ENCODE measurements at regions of chr7 and their contacts with region 1.

Region 1: DNA sequence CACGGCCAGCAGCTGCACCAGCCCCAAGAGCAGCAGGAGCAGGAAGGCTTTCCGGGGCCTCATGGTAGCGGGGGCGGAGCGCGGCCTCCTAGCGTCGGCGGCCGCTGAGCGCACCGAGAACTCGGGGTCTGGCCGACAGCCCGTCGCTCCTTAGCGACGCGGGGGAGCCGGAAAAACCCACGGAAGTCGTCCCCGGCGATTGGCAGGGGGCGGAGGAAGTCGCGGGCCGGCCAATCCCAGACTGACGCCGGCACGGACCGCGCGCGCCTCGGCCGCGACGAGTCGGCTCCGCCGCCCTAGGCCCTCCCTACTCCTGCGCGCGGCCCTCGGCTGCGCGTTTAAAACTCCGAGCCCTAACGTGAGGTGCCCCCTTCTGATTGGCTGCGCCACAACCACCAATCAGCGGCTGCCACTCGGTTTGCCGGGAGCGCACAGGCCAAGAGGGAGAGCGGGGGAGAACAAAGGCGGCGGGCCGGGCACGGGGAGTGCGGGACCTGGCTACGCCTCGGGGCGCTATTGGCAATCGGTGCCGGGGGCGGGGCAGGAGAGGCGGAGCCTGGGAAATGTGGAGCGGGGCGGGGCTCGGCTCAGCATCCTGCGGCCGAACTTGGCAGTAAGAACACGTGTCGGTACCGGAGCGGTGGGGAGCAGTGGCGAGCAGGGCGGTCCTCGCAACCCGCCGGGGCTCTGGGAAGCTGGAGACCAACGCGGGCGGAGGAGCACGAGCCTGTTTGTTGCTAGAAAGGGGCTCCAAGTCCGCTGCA is at the start of gene PDIA4:
- DNase-seq: peak; percentile 100
- H3K4me3 ChIP-seq: peak within 1 kb of the TSS; percentile 68 to 88 (median 72)
- H3K27ac ChIP-seq: peak within 1 kb of the TSS; percentile 85 to 92 (median 90)
- H3K4me1 ChIP-seq: peaks cover 17 to 30% (median 25%) of the 10 kb centered on the region in 4 donors
- H3K27me3 ChIP-seq: no peaks in the 10 kb centered on the region
- CTCF ChIP-seq: peak; percentile 6 to 43 (median 9)
- EP300 ChIP-seq: no peak
- POLR2A ChIP-seq: peak; percentile 28
- total RNA-seq, gene PDIA4: 33.2 to 58.1 (median 42.8) TPM

Region 2: GRCh38 chr7:148698397-148699023 is 330.0 kb before region 1 on chr7 and contains the start of gene CUL1:
- intact Hi-C with region 1: no loop called
- DNase-seq: peak; percentile 96
- H3K4me3 ChIP-seq: peak within 1 kb of the TSS; percentile 81 to 99 (median 96)
- H3K27ac ChIP-seq: peak within 1 kb of the TSS; percentile 96 to 99 (median 99)
- H3K4me1 ChIP-seq: peaks cover 24 to 47% (median 43%) of the 10 kb centered on the region in 4 donors
- H3K27me3 ChIP-seq: no peaks in the 10 kb centered on the region
- CTCF ChIP-seq: no peak
- EP300 ChIP-seq: no peak
- POLR2A ChIP-seq: peak; percentile 66
- total RNA-seq, gene CUL1: 73.1 to 87.1 (median 77.8) TPM

Region 3: GRCh38 chr7:148987010-148987750 is 41.3 kb before region 1 on chr7:
- intact Hi-C with region 1: loop called (anchors 2 kb)
- DNase-seq: peak; percentile 96
- H3K4me3 ChIP-seq: peak overlapping the region; percentile 60 to 65 (median 63)
- H3K27ac ChIP-seq: peak overlapping the region; percentile 82 to 84 (median 83)
- H3K4me1 ChIP-seq: peaks cover 18 to 49% (median 42%) of the 10 kb centered on the region in 4 donors
- H3K27me3 ChIP-seq: no peaks in the 10 kb centered on the region
- CTCF ChIP-seq: no peak
- EP300 ChIP-seq: no peak
- POLR2A ChIP-seq: no peak

Region 4: DNA sequence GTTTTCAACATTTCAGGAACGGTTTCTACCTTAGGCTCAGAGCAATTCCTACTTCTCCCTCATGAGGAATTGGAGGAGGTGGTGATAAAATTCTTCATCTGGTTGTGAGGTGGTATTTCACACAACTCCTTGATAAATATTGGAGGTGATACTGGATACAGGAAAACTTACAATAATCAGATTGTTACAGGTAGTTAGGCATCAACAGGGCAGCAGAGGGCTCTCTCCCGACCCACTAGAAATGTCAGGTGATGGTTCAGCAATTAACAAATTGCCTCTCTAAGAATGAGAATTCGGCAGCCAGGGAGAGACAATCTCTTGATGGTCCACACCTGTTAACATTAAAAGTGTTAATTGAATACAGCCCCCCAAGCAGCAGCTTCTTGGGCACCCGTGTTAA is 39.3 kb after region 1 on chr7:
- intact Hi-C with region 1: loop called (anchors 2 kb)
- DNase-seq: no peak
- H3K4me3 ChIP-seq: no peak overlapping the region
- H3K27ac ChIP-seq: no peak overlapping the region
- H3K4me1 ChIP-seq: peaks cover 0 to 12% (median 5%) of the 10 kb centered on the region in 4 donors
- H3K27me3 ChIP-seq: no peaks in the 10 kb centered on the region
- CTCF ChIP-seq: no peak
- EP300 ChIP-seq: no peak
- POLR2A ChIP-seq: no peak